T-cell (primary cell): ENCODE measurements at regions of chr5 and their contacts with region 1.

Region 1: GRCh38 chr5:149442563-149443182 is 63.6 kb upstream of the IL17B start:
- DNase-seq: peak in 34 of 35 experiments; percentile 18 to 76 (median 56)
- ATAC-seq: peak; percentile 71 to 77 (median 74)
- H3K4me3 ChIP-seq: no peak overlapping the region
- H3K4me3 Mint-ChIP-seq: no peak overlapping the region
- H3K27ac ChIP-seq: no peak overlapping the region
- H3K27ac Mint-ChIP-seq: no peak overlapping the region
- H3K4me1 ChIP-seq: peaks cover 0 to 12% of the 10 kb centered on the region in 2 experiments
- H3K4me1 Mint-ChIP-seq: peaks cover 10 to 13% (median 11%) of the 10 kb centered on the region in 3 donors
- H3K27me3 ChIP-seq: peaks cover 0 to 7% of the 10 kb centered on the region in 2 experiments
- H3K27me3 Mint-ChIP-seq: peaks cover 0 to 2% of the 10 kb centered on the region in 2 donors

Region 2: DNA sequence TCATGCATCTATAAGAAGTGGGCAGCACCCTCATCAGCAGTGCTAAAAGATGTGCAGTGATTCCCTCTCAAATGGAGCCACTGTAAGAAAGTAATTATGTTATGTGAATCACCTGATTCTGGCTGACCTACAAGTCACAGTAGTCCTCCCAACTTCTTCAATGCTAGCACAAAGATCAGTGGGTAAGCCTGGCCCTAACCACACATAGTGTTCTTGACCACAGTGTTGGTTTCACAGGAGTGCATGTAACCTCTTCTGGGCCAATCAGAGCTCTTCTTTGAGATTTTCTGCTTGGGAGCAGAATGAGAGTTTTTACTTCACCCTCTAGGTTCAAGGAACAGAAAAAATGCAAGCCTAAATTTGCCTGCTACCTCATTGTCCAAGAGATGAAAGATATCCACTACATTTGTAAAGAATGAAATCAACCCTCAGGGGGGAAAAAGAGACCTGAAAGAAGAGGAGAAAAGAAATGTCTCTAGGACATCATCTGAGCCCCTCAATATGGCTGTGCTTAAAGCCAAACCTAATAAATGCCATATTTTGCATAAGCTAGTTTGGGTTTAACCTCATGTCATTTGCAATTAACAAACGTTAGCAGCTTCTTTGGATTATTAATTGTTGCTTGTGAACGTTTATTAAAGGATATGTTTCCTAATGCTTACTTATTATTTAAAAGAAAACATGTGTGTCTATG is 681.6 kb before region 1 on chr5:
- CTCF ChIA-PET with region 1: no interaction called
- POLR2A ChIA-PET with region 1: no interaction called
- DNase-seq: peak in 1 of 35 experiments; percentile 3
- ATAC-seq: no peak
- H3K4me3 ChIP-seq: no peak overlapping the region
- H3K4me3 Mint-ChIP-seq: no peak overlapping the region
- H3K27ac ChIP-seq: no peak overlapping the region
- H3K27ac Mint-ChIP-seq: no peak overlapping the region
- H3K4me1 ChIP-seq: no peaks in the 10 kb centered on the region
- H3K4me1 Mint-ChIP-seq: no peaks in the 10 kb centered on the region
- H3K27me3 ChIP-seq: peaks cover 0 to 4% of the 10 kb centered on the region in 2 experiments
- H3K27me3 Mint-ChIP-seq: peaks cover 3 to 12% of the 10 kb centered on the region in 2 donors

Region 3: GRCh38 chr5:149455889-149456409 is 13.3 kb after region 1 on chr5:
- CTCF ChIA-PET with region 1: no interaction called
- POLR2A ChIA-PET with region 1: no interaction called
- DNase-seq: no peak
- ATAC-seq: peak in 1 of 4 experiments; percentile 59
- H3K4me3 ChIP-seq: no peak overlapping the region
- H3K4me3 Mint-ChIP-seq: no peak overlapping the region
- H3K27ac ChIP-seq: no peak overlapping the region
- H3K27ac Mint-ChIP-seq: no peak overlapping the region
- H3K4me1 ChIP-seq: no peaks in the 10 kb centered on the region
- H3K4me1 Mint-ChIP-seq: peaks cover 0 to 7% (median 0%) of the 10 kb centered on the region in 3 donors
- H3K27me3 ChIP-seq: no peaks in the 10 kb centered on the region
- H3K27me3 Mint-ChIP-seq: no peaks in the 10 kb centered on the region

Region 4: DNA sequence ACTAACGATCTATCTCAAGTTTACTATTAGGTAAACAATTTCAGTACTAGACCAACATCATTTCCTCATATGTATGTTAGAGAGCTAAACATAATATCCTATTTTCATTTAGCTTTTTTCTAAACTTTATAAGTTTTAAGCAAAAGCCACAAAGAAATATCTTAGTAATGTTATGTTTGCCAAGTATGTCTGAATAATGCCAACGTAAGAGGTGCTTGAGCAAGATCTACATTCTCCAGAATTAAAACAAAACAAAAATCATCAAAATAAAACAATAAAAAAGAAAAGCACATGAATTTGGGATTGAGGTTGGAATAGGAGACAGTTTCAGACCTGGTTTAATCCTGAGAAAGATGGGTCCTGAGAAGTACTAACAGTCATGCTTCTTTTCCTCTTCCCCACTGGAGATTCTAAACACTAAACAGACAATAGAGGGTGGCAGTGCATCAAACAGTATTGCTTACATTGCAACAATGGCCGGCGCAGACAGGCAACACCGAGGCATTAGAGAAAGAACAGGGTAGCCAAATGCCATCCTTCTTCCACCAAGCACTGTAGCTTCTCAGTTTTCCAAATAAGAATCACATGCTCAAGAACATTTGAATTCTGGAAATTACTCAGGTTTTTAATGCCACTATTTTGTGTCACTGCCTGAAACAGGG is 74.9 kb after region 1 on chr5:
- CTCF ChIA-PET with region 1: interaction called, 4 to 6 read pairs
- POLR2A ChIA-PET with region 1: interaction called in 1 of 2 experiments, 17 read pairs
- DNase-seq: no peak
- ATAC-seq: no peak
- H3K4me3 ChIP-seq: no peak overlapping the region
- H3K4me3 Mint-ChIP-seq: no peak overlapping the region
- H3K27ac ChIP-seq: no peak overlapping the region
- H3K27ac Mint-ChIP-seq: peak overlapping the region; percentile 19 to 46
- H3K4me1 ChIP-seq: peaks cover 10 to 11% of the 10 kb centered on the region in 2 experiments
- H3K4me1 Mint-ChIP-seq: peaks cover 69 to 83% (median 77%) of the 10 kb centered on the region in 3 donors
- H3K27me3 ChIP-seq: no peaks in the 10 kb centered on the region
- H3K27me3 Mint-ChIP-seq: no peaks in the 10 kb centered on the region

Region 5: GRCh38 chr5:149567226-149567625 is 124.6 kb after region 1 on chr5:
- CTCF ChIA-PET with region 1: interaction called, 9 to 16 read pairs
- POLR2A ChIA-PET with region 1: no interaction called
- DNase-seq: no peak
- ATAC-seq: no peak
- H3K4me3 ChIP-seq: no peak overlapping the region
- H3K4me3 Mint-ChIP-seq: no peak overlapping the region
- H3K27ac ChIP-seq: no peak overlapping the region
- H3K27ac Mint-ChIP-seq: no peak overlapping the region
- H3K4me1 ChIP-seq: peaks cover 3 to 6% of the 10 kb centered on the region in 2 experiments
- H3K4me1 Mint-ChIP-seq: peaks cover 9 to 12% (median 11%) of the 10 kb centered on the region in 3 donors
- H3K27me3 ChIP-seq: no peaks in the 10 kb centered on the region
- H3K27me3 Mint-ChIP-seq: no peaks in the 10 kb centered on the region